GM13977 (cell line): ENCODE measurements at regions of chr15 and their contacts with region 1.

Region 1: DNA sequence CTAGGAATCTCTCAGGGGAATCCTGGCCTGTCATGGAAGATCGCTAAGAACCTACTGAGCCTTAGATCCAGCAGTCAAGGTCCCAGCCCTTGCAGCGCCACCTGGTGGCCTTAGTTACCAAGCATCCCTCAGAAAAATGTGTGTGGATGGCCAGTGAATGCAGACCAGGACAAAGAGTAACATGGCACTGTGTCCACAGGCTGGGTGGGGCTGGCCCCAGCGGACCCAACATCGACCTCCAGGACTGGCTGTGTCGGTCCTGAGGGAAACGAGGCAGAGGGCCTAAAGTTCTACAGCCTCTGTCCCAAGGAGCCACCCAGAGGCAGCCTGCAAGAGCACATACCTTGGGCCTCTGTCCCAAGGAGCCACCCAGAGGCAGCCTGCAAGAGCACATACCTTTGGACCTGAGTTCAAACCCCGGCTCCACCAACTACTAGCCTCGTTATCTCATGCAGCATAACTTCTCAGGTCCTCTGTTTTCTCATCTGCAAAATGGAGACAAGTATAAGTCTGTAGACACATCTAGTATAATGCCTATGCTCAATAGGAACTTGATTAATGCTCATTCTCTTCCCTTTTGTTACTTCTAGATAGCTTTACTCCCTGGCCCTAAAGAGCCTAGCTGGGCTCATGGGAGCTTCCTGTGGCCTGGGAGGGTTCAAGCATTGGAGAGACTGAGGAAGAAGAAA is 57.5 kb upstream of the HERC1 start:
- DNase-seq: peak; percentile 61
- CTCF ChIP-seq: peak; percentile 83

Region 2: GRCh38 chr15:63487076-63487757 is 404.0 kb before region 1 on chr15:
- in situ Hi-C with region 1: loop called (anchors 25 kb)
- DNase-seq: peak; percentile 64
- CTCF ChIP-seq: peak; percentile 90

Region 3: DNA sequence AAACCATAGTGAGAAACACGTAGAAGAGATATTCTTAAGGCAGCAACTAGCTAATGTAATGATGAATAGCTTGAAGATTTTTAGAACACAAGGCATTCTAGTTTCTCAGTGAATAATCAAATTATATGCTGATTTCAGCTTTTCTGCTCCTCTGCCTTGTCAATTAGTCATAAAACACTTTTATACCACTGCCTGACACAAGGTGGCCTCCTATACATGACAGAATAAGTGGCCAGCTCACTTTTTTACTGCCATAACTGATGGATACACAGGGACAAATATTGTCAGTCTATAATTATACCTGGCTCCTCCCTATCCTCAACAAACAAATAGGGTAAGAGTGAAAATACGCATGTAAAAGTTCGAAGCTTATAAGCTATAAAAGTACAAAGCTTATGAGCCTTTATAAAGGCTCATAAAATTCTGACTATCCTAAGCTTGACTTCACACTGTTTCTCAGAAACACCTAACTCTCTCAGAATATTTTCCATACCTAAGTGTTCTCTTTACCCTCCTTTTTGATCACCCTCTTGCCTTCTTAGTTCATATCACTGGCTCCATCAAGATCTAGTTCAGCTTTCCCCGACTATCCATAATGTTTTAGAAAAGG is 139.0 kb before region 1 on chr15:
- in situ Hi-C with region 1: loop called (anchors 10 kb)
- DNase-seq: peak; percentile 34
- CTCF ChIP-seq: peak; percentile 72

Region 4: DNA sequence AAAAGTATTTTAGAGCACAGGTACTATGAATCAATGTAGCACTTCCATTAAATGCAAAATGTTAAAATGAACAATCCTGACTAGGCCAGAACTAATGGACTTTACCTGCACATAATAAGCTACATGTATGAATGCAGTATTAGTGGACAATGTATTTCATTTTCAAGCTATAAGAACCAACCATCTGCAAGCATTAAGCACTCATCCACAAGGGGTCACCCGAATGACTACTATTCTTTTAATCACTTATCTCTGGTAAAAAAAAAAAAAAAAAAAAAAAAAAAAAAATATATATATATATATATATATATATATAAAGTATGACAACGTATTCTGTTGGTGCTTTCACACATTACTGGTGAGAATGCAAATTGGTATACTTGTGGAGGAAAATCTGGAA is 64.7 kb before region 1 on chr15:
- in situ Hi-C with region 1: no loop called
- DNase-seq: no peak
- CTCF ChIP-seq: peak; percentile 37